ENCODE measurements at regions of chr10 and their contacts with region 1.

Region 1: DNA sequence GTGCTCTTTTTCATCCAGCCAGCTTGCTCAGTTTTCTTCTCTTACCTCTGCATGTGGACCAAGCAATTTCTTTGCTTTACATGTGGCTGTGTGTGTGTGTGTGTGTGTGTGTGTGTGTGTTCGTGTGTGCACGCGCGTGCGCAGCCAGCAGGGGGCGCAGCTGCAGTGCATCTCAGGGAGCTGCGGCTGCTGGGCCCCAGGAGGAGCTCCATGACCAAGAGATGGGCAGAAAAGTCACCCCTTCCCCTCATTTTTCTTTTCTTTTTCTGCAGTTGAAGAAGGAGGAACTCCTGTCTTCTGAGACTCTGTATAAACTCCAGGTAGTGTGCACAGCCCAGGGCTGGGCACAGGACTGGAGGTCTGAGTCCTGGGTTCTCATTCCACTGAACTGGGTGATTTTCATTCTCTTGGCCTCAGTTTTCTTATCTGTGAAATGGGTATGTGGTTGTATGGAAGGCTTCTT is 41.8 kb downstream of the BLNK start:
- DNase-seq: peak; percentile 46 to 86 (median 68)
- ATAC-seq: peak; percentile 80
- H3K4me3 ChIP-seq: no peak overlapping the region
- H3K4me3 Mint-ChIP-seq: no peak overlapping the region
- H3K27ac ChIP-seq: no peak overlapping the region
- H3K27ac Mint-ChIP-seq: no peak overlapping the region
- H3K4me1 ChIP-seq: no peaks in the 10 kb centered on the region
- H3K4me1 Mint-ChIP-seq: no peaks in the 10 kb centered on the region
- H3K27me3 ChIP-seq: no peaks in the 10 kb centered on the region
- H3K27me3 Mint-ChIP-seq: no peaks in the 10 kb centered on the region
- CTCF ChIP-seq: peak; percentile 54

Region 2: DNA sequence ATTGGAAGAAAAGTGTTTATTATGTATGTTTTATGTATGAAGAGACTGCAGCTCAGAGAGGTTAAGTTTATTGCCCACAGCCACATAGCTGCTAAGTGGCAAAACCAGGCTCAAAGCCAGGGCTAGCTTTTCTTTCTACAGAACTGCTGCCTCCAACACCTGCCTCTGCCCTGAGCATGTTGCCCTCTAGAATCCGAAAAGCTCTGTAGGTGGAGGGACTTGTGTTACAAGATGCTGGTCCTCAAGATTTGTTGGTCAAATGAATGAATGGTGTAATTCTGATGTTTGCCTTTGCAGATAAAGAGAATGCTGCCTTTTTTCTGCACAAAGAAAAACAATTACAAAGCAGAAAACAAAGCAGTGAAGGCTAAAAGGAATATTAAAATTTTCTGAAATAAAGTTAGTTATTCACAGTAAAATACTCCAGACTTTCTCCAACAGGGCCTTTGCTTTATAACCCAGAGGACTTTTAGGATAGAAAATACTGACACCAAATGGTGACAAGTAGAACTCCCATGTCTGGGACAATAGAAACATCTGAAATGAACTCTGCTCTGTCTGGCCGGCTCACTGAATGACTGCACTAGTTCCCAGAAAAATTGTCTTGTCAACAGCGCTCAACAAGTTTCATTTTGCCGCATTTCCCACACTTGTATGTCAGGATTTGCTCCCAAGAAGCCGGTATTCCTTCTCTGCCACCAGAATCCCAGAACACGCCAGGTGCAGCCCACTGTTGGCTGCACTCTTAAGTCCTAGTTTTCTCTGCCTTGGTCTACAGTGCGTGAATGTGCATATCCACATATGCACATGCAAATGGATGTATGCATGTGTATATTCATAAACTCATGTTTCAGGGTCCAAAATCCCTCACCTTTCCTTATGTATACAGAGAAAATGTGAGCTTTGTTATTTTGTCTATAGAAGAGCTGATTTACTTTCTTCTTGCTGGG is 63.6 kb after region 1 on chr10:
- CTCF ChIA-PET with region 1: interaction called, 9 read pairs
- POLR2A ChIA-PET with region 1: interaction called, 5 read pairs
- intact Hi-C with region 1: loop called (anchors 1 kb)
- DNase-seq: peak in 6 of 14 experiments; percentile 2 to 52 (median 24)
- ATAC-seq: no peak
- H3K4me3 ChIP-seq: no peak overlapping the region
- H3K4me3 Mint-ChIP-seq: no peak overlapping the region
- H3K27ac ChIP-seq: no peak overlapping the region
- H3K27ac Mint-ChIP-seq: peak overlapping the region; percentile 5
- H3K4me1 ChIP-seq: peaks cover 7% of the 10 kb centered on the region
- H3K4me1 Mint-ChIP-seq: peaks cover 34% of the 10 kb centered on the region
- H3K27me3 ChIP-seq: no peaks in the 10 kb centered on the region
- H3K27me3 Mint-ChIP-seq: no peaks in the 10 kb centered on the region
- CTCF ChIP-seq: peak; percentile 48

Region 3: DNA sequence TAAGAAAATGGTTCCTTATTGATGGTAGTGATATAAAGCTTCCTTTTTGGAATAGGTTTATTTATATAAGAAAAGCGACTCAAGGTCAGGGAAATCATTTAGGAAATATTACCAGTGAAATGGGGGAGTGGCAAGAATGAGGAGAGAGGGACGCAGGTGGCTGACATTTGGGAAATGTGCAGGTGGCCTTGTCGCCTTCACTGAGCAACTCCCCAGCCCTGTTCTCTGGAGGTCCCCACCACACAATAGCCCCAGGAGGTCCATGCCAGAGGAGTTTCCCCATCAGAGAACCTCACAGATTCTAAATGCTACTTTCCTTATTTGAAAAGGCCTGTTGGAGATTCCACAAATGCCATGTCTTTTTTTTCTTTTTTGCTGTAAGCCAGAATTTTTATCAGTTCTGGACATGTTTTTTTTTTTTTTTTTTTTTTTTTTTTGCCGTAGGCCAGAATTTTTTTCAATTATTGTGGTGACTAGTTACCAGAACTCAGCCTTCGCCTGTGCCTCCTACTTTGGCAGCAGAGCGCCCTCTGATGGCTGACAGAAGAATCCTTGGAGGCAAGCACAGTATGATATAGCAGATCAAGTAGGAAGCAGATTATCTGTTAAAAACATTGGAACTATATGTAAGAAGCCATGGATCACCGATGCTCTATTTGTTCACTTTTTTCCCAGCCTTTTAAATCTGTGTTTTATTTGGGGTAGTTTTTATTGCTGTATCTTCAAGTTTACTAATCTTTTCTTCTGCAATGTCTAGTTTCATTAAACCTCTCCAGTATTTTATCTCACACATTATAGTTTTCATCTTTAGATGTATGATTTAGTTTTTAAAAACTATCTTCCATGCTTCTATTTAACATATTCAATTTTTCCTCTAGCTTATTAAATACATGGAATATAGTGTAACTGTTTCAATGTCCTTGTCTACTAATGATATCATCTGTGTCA is 110.6 kb after region 1 on chr10:
- CTCF ChIA-PET with region 1: interaction called, 9 read pairs
- POLR2A ChIA-PET with region 1: interaction called, 6 read pairs
- intact Hi-C with region 1: loop called (anchors 1 to 2 kb)
- DNase-seq: peak; percentile 28 to 77 (median 46)
- ATAC-seq: peak; percentile 87
- H3K4me3 ChIP-seq: no peak overlapping the region
- H3K4me3 Mint-ChIP-seq: no peak overlapping the region
- H3K27ac ChIP-seq: no peak overlapping the region
- H3K27ac Mint-ChIP-seq: no peak overlapping the region
- H3K4me1 ChIP-seq: no peaks in the 10 kb centered on the region
- H3K4me1 Mint-ChIP-seq: peaks cover under 1% of the 10 kb centered on the region
- H3K27me3 ChIP-seq: no peaks in the 10 kb centered on the region
- H3K27me3 Mint-ChIP-seq: no peaks in the 10 kb centered on the region
- CTCF ChIP-seq: peak; percentile 69

Region 4: DNA sequence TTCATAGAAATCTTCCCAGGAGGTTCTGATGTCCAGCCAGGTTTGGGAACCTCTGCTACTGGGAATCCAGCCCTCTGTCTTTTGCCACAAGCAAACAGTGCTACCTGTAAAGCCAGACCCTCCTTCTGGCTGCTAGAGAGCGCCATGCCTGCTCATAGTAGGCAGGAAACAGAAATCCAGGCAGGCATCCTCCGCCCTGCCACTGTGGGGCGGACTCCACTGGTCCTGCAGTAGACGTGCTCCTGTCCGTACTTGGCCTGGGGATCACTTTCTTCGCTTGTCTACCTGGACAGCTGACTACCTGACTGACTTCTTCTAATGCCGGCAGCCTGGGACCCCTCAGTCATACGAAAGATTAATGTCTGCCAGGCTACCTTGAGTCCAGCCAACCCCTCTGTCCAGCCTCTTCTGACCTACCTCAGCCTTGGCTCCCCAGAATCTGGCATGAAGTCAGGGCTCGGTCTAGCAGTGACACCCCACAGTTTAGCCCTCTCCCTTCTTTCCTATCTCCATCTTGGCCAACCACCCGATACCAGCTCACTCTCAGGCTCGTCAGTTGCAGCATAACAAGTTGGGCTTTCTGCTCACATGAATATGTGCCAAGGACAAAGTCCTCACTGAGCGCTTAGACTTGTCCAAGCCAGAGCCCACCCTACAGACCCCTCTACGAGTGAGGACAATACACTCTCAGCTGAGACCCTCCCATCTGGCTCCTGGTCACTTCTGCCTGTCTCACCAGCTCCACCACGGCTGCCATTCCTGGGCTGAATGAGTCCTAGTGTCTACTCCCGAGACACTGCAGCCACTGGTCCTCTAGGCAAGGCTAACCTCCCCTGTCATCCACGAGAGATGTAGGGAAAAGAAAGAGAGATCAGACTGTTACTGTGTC is 173.1 kb after region 1 on chr10:
- CTCF ChIA-PET with region 1: no interaction called
- POLR2A ChIA-PET with region 1: no interaction called
- intact Hi-C with region 1: no loop called
- DNase-seq: no peak
- ATAC-seq: no peak
- H3K4me3 ChIP-seq: no peak overlapping the region
- H3K4me3 Mint-ChIP-seq: no peak overlapping the region
- H3K27ac ChIP-seq: no peak overlapping the region
- H3K27ac Mint-ChIP-seq: no peak overlapping the region
- H3K4me1 ChIP-seq: no peaks in the 10 kb centered on the region
- H3K4me1 Mint-ChIP-seq: no peaks in the 10 kb centered on the region
- H3K27me3 ChIP-seq: peaks cover 10 to 11% of the 10 kb centered on the region in 2 experiments
- H3K27me3 Mint-ChIP-seq: peaks cover 45% of the 10 kb centered on the region
- CTCF ChIP-seq: no peak

Region 5: DNA sequence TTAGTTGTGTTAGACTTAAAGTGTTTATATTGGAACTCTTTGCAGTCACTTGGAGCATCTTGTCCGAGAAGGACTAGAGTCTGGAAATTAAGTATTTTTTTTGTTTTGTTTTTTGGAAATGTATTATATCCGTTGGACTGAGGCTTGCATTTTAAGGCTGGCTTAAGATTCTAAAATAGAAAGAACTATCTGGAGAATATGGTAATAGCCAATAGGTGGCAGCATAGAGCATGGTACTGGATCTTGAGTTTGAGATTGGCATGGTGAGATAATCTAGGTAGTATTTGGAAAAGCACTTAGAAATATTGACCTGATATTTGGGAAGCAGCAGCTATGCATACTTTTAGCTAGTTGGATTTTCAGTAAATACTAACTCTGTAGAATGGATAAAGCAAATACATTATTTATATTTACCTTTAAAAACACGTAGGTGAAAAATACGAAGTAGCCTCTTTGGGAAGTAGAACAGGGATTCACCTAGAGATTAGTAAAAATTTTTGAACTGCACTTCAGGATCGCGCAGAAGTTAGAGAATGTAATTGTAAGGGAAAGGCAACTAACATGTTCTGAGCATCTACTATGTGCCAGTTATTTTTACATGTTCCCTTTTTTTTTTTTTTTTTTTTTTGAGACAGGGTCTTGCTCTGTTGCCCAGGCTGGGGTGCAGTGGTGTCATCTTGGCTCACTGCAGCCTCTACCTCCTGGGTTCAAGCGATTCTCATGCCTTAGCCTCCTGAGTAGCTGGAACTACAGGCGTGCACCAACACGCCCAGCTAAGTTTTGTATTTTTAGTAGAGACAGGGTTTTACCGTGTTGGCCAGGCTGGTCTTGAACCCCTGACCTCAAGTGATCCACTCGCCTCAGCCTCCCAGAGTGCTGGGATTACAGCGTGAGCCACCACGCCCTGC is 681.1 kb after region 1 on chr10:
- CTCF ChIA-PET with region 1: no interaction called
- POLR2A ChIA-PET with region 1: no interaction called
- intact Hi-C with region 1: no loop called
- DNase-seq: peak in 4 of 14 experiments; percentile 20 to 67 (median 55)
- ATAC-seq: peak; percentile 64
- H3K4me3 ChIP-seq: no peak overlapping the region
- H3K4me3 Mint-ChIP-seq: no peak overlapping the region
- H3K27ac ChIP-seq: no peak overlapping the region
- H3K27ac Mint-ChIP-seq: peak overlapping the region; percentile 7
- H3K4me1 ChIP-seq: no peaks in the 10 kb centered on the region
- H3K4me1 Mint-ChIP-seq: peaks cover 42% of the 10 kb centered on the region
- H3K27me3 ChIP-seq: no peaks in the 10 kb centered on the region
- H3K27me3 Mint-ChIP-seq: no peaks in the 10 kb centered on the region
- CTCF ChIP-seq: peak; percentile 81

Region 6: DNA sequence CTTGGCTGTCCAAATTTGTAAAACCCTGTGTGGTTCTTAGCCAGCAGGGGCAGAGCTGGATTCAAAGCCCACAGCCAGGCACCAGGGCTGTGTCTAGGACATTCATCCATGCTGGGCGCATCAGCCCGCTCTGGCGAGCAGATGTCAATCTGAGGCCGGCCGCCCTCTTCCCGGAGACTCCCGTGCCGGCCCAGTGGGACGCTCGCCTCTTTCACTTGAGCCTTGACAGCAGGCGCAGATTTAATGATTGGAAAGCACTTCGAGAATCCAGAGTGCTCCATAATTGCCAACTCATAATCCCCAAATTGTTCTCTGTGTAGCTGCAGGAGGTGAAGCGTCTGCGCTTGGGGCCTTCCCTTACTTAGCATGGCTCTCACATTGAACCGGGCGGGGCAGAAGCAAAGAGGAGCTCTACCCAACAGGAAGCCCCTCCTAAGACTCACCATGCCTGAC is 919.5 kb after region 1 on chr10:
- CTCF ChIA-PET with region 1: no interaction called
- POLR2A ChIA-PET with region 1: no interaction called
- intact Hi-C with region 1: no loop called
- DNase-seq: no peak
- ATAC-seq: no peak
- H3K4me3 ChIP-seq: no peak overlapping the region
- H3K4me3 Mint-ChIP-seq: no peak overlapping the region
- H3K27ac ChIP-seq: no peak overlapping the region
- H3K27ac Mint-ChIP-seq: no peak overlapping the region
- H3K4me1 ChIP-seq: no peaks in the 10 kb centered on the region
- H3K4me1 Mint-ChIP-seq: no peaks in the 10 kb centered on the region
- H3K27me3 ChIP-seq: no peaks in the 10 kb centered on the region
- H3K27me3 Mint-ChIP-seq: no peaks in the 10 kb centered on the region
- CTCF ChIP-seq: no peak